T-cell (primary cell): ENCODE measurements at regions of chr17 and their contacts with region 1.

Region 1: GRCh38 chr17:49315551-49316257 is 46.3 kb downstream of the ZNF652 start:
- DNase-seq: peak; percentile 54 to 89 (median 74)
- ATAC-seq: peak; percentile 98 to 100 (median 100)
- H3K4me3 ChIP-seq: peak overlapping the region in 1 of 2 donors; percentile 8
- H3K4me3 Mint-ChIP-seq: peak overlapping the region; percentile 35 to 63 (median 54)
- H3K27ac ChIP-seq: peak overlapping the region; percentile 44
- H3K27ac Mint-ChIP-seq: peak overlapping the region; percentile 58 to 86
- H3K4me1 ChIP-seq: peaks cover 5 to 9% of the 10 kb centered on the region in 2 experiments
- H3K4me1 Mint-ChIP-seq: peaks cover 36 to 39% (median 38%) of the 10 kb centered on the region in 3 donors
- H3K27me3 ChIP-seq: no peaks in the 10 kb centered on the region
- H3K27me3 Mint-ChIP-seq: no peaks in the 10 kb centered on the region

Region 2: DNA sequence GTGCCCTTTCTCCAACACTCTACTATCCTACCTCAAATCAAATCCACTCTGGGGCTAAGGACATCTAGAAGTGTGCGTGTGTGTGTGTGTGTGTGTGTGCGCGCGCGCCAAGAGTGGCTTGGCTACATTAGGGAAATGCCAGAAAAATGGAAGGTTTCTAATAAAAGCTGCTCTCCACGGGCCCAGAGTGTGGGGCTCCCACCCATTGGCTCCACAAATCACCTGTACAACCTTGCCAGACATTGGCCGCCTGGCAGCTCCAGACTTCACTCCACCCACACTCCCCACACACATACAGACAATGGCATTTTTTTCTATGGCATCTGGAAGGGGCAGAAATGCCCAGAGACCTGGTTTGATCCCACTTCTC is 54.8 kb before region 1 on chr17:
- CTCF ChIA-PET with region 1: no interaction called
- POLR2A ChIA-PET with region 1: no interaction called
- DNase-seq: no peak
- ATAC-seq: peak in 1 of 4 experiments; percentile 4
- H3K4me3 ChIP-seq: peak overlapping the region; percentile 46 to 73
- H3K4me3 Mint-ChIP-seq: peak overlapping the region; percentile 73 to 79 (median 77)
- H3K27ac ChIP-seq: no peak overlapping the region
- H3K27ac Mint-ChIP-seq: no peak overlapping the region
- H3K4me1 ChIP-seq: peaks cover 5 to 17% of the 10 kb centered on the region in 2 experiments
- H3K4me1 Mint-ChIP-seq: peaks cover 9 to 11% (median 11%) of the 10 kb centered on the region in 3 donors
- H3K27me3 ChIP-seq: peaks cover 0 to 33% of the 10 kb centered on the region in 2 experiments
- H3K27me3 Mint-ChIP-seq: peaks cover 8 to 11% of the 10 kb centered on the region in 2 donors

Region 3: GRCh38 chr17:49343273-49343672 is 27.6 kb after region 1 on chr17:
- CTCF ChIA-PET with region 1: interaction called, 9 to 10 read pairs
- POLR2A ChIA-PET with region 1: no interaction called
- DNase-seq: peak in 1 of 35 experiments; percentile 47
- ATAC-seq: peak; percentile 27 to 41 (median 39)
- H3K4me3 ChIP-seq: peak overlapping the region in 1 of 2 donors; percentile 2
- H3K4me3 Mint-ChIP-seq: peak overlapping the region; percentile 60 to 75 (median 67)
- H3K27ac ChIP-seq: peak overlapping the region; percentile 62
- H3K27ac Mint-ChIP-seq: peak overlapping the region; percentile 88 to 92
- H3K4me1 ChIP-seq: peaks cover 17 to 77% of the 10 kb centered on the region in 2 experiments
- H3K4me1 Mint-ChIP-seq: peaks cover 61 to 74% (median 65%) of the 10 kb centered on the region in 3 donors
- H3K27me3 ChIP-seq: no peaks in the 10 kb centered on the region
- H3K27me3 Mint-ChIP-seq: no peaks in the 10 kb centered on the region

Region 4: GRCh38 chr17:49369089-49369488 is 53.4 kb after region 1 on chr17:
- CTCF ChIA-PET with region 1: interaction called, 4 to 46 read pairs
- POLR2A ChIA-PET with region 1: interaction called, 3 read pairs
- DNase-seq: no peak
- ATAC-seq: no peak
- H3K4me3 ChIP-seq: no peak overlapping the region
- H3K4me3 Mint-ChIP-seq: no peak overlapping the region
- H3K27ac ChIP-seq: no peak overlapping the region
- H3K27ac Mint-ChIP-seq: no peak overlapping the region
- H3K4me1 ChIP-seq: peaks cover 0 to 22% of the 10 kb centered on the region in 2 experiments
- H3K4me1 Mint-ChIP-seq: peaks cover 11 to 31% (median 12%) of the 10 kb centered on the region in 3 donors
- H3K27me3 ChIP-seq: no peaks in the 10 kb centered on the region
- H3K27me3 Mint-ChIP-seq: no peaks in the 10 kb centered on the region

Region 5: DNA sequence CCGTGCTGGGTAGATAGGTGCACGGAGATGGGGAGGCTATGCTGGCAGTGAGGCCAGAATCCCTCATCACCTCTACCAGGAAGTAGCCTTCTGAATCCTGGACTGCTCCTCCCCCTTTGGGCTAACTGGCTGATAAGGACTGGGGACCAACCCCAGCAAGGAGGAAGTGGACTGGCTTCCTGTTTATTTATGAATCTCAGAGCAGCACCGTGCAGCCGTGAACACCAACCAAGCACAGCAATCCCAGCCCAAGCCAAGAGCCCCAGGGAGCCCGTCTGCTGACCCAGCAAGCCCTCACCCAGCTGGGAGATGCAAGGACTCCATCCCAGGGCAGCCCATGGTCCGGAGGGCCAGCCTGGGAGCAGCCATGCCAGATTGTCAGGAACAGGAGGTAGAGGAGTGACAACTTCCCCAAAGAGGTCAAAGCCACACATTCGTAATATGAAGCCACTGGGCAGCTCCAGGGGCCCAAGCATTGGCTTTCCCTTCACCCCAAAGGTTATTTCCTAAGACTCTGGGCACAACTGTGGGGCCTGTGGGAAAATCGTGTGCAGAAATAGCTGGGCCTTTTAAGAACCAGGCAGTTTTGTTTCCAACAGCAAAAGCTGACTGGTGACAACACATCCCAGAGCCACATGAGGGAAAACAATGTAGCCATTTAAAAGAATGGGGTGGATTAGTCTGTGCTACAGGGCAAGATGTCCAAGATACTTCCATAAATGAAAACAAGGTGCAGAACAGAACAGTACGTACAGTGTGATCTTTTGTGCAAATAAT is 75.0 kb after region 1 on chr17:
- CTCF ChIA-PET with region 1: interaction called, 6 to 14 read pairs
- POLR2A ChIA-PET with region 1: no interaction called
- DNase-seq: peak in 5 of 35 experiments; percentile 3 to 49 (median 16)
- ATAC-seq: peak in 1 of 4 experiments; percentile 26
- H3K4me3 ChIP-seq: peak overlapping the region in 1 of 2 donors; percentile 33
- H3K4me3 Mint-ChIP-seq: peak overlapping the region; percentile 67 to 80 (median 75)
- H3K27ac ChIP-seq: peak overlapping the region; percentile 50
- H3K27ac Mint-ChIP-seq: peak overlapping the region; percentile 95 to 100
- H3K4me1 ChIP-seq: peaks cover 32 to 59% of the 10 kb centered on the region in 2 experiments
- H3K4me1 Mint-ChIP-seq: peaks cover 59 to 69% (median 59%) of the 10 kb centered on the region in 3 donors
- H3K27me3 ChIP-seq: no peaks in the 10 kb centered on the region
- H3K27me3 Mint-ChIP-seq: no peaks in the 10 kb centered on the region

Region 6: GRCh38 chr17:49788478-49789242 is 473.0 kb after region 1 on chr17 and contains the start of gene KAT7:
- CTCF ChIA-PET with region 1: no interaction called
- POLR2A ChIA-PET with region 1: no interaction called
- DNase-seq: peak; percentile 92 to 100 (median 99)
- ATAC-seq: peak; percentile 84 to 88 (median 88)
- H3K4me3 ChIP-seq: peak within 1 kb of the TSS; percentile 95 to 99
- H3K4me3 Mint-ChIP-seq: peak within 1 kb of the TSS; percentile 89 to 99 (median 95)
- H3K27ac ChIP-seq: peak within 1 kb of the TSS; percentile 98
- H3K27ac Mint-ChIP-seq: peak within 1 kb of the TSS; percentile 98 to 99
- H3K4me1 ChIP-seq: peaks cover 16 to 30% of the 10 kb centered on the region in 2 experiments
- H3K4me1 Mint-ChIP-seq: peaks cover 58 to 62% (median 58%) of the 10 kb centered on the region in 3 donors
- H3K27me3 ChIP-seq: no peaks in the 10 kb centered on the region
- H3K27me3 Mint-ChIP-seq: no peaks in the 10 kb centered on the region
- total RNA-seq, gene KAT7: 96.8 to 197 (median 99.7) TPM